KBM-7 (cell line): ENCODE measurements at regions of chr2 and their contacts with region 1.

Region 1: GRCh38 chr2:104872866-104873688 is 19.2 kb downstream of the POU3F3 start:
- DNase-seq: peak; percentile 92

Region 2: DNA sequence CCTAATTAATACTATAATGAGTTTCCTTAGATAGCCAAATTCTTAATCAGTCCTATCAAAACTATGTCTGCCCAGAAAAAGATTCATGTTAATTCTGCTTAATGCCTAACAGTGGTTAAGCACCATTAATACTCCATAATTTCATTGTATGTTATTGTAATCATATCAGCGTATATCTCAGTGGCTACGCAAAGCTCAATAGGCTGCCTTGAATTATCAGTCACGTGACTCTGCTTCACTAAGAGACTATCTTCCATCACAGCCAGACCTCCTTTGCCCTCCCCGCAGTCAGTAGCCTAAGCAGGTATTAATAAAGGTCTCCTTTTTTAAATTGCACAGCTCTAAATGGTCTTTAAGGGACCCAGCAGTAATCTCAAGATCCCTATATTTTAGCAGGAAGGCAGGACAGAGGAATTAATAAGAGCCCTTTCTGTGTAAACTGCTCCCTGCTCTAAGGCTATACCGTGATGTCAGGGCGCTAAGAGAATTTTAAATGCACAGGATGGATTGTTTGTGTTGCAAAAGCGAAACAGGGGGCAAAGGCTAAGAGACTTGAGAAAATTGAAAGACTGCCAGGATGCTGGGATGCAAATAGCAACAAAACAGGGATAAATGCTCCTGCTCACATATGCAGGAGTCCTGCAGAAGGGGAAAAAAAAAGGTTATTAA is 234.8 kb before region 1 on chr2:
- in situ Hi-C with region 1: loop called (anchors 25 kb)
- DNase-seq: no peak